Right ventricle myocardium superior (tissue), 1 donor: ENCODE measurements at regions of chr18 and their contacts with region 1.

Region 1: GRCh38 chr18:23365602-23366001 is 87.5 kb upstream of the RIOK3 start:
- DNase-seq: no peak
- ATAC-seq: peak; percentile 87

Region 2: DNA sequence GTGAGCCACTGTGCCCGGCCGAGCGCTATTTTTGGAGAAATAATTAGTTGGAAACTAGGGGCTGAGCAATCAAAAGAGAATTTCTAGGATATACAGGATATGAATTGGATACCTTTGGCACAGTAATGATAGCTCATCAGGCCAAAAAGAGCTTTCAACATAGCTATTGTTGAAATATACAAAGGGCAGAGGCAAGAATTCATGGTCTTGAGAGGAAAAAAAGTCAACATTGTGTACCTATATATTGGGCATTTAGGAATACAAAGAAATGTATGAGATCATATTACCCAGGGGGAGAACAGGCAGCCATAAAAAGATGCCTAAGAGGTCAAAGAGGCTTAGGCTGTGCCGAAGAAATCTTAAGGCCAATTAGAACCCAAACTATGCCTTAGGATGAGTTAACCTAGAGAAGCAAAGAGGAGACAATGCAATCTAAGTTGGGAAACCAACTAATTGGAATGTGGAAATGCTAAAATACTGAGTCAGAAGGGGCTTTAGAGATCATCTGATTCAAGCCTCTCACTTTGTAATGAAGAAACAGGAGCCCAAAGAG is 333.5 kb before region 1 on chr18:
- intact Hi-C with region 1: loop called (anchors 10 kb)
- DNase-seq: no peak
- ATAC-seq: no peak

Region 3: GRCh38 chr18:23452728-23453679 is 87.4 kb after region 1 on chr18 and contains the start of gene RIOK3:
- intact Hi-C with region 1: no loop called
- DNase-seq: peak; percentile 99
- ATAC-seq: peak; percentile 98
- total RNA-seq, gene RIOK3: 51.5 TPM